GM12878 (cell line): ENCODE measurements at regions of chr17 and their contacts with region 1.

Region 1: GRCh38 chr17:70242781-70243437 is 73.6 kb downstream of the KCNJ2 start:
- DNase-seq: no peak
- ATAC-seq: peak; percentile 90
- H3K4me3 ChIP-seq: no peak overlapping the region
- H3K27ac ChIP-seq: no peak overlapping the region
- H3K4me1 ChIP-seq: no peaks in the 10 kb centered on the region
- H3K27me3 ChIP-seq: no peaks in the 10 kb centered on the region
- CTCF ChIP-seq: no peak
- EP300 ChIP-seq: no peak
- POLR2A ChIP-seq: no peak
- RAD21 ChIP-seq: no peak

Region 2: GRCh38 chr17:70168977-70169708 is 73.8 kb before region 1 on chr17 and contains the start of gene KCNJ2:
- CTCF ChIA-PET with region 1: interaction called, 3 read pairs
- POLR2A ChIA-PET with region 1: interaction called, 4 read pairs
- RAD21 ChIA-PET with region 1: interaction called, 12 read pairs
- SMC1A ChIA-PET with region 1: interaction called, 7 read pairs
- in situ Hi-C with region 1: no loop called
- intact Hi-C with region 1: loop called (anchors 5 kb)
- DNase-seq: no peak
- ATAC-seq: peak; percentile 95
- H3K4me3 ChIP-seq: peak within 1 kb of the TSS; percentile 38
- H3K27ac ChIP-seq: no peak within 1 kb of the TSS
- H3K4me1 ChIP-seq: peaks cover 8% of the 10 kb centered on the region
- H3K27me3 ChIP-seq: peaks cover 0 to 10% of the 10 kb centered on the region in 2 experiments; a peak in 1 of 4 replicates
- CTCF ChIP-seq: no peak
- EP300 ChIP-seq: no peak
- POLR2A ChIP-seq: no peak
- RAD21 ChIP-seq: no peak
- polyA plus RNA-seq, gene KCNJ2: 1.6 to 3.0 TPM

Region 3: DNA sequence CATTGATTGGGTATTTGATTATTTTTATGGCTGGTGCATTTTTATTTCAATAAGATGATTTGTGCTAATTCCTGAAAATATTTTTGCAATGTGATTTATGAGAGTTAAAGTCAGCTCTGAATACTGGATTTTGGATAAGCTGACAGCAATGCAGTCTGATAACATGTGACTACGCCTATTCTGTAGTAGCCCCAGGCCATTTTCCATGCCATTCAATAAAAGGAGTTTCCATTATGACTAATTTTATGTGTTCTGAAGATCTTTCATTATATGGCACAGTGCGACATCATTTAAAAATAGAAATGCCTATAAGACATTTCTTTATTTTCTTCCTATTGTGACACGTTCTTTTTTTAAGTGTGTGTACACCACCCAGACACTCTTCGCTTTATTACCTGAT is 27.3 kb before region 1 on chr17:
- CTCF ChIA-PET with region 1: interaction called, 9 read pairs
- POLR2A ChIA-PET with region 1: interaction called, 3 read pairs
- RAD21 ChIA-PET with region 1: no interaction called
- SMC1A ChIA-PET with region 1: interaction called, 83 read pairs
- in situ Hi-C with region 1: no loop called
- intact Hi-C with region 1: no loop called
- DNase-seq: no peak
- ATAC-seq: no peak
- H3K4me3 ChIP-seq: no peak overlapping the region
- H3K27ac ChIP-seq: no peak overlapping the region
- H3K4me1 ChIP-seq: no peaks in the 10 kb centered on the region
- H3K27me3 ChIP-seq: no peaks in the 10 kb centered on the region
- CTCF ChIP-seq: no peak
- EP300 ChIP-seq: no peak
- POLR2A ChIP-seq: no peak
- RAD21 ChIP-seq: no peak

Region 4: DNA sequence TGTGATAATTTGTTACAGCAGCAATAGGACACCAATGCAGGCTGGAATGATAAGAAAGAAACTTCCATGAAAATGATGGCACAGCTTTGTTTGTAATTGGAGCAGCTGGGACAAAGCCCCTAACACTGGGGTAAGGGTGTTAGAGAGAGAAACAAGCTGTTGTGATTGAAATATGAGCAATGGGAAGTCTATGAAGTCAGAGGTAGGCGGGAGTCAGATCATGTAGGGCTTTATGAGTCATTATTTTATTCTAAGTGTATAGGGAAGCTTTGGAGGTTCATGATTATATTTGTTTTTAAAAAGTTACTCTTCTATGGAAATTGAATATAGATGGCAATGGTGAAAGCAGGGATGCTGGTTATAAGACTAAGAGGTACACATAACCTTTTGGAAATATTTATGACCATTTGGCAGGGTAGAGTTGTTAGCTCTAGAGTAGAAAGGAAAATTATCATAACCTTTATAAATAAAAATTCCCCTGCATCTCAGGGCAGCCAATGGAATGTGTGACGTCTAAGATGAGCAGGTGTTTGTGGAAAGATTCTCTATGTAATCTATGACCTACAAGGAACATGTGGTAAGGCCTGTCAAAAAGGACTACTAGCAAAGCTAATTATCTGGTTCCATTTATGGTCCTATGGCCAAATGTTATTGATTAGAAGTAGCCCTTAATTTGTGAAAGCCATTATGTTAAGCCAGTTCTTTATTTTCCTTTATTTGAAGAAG is 12.0 kb after region 1 on chr17:
- CTCF ChIA-PET with region 1: interaction called, 7 read pairs
- POLR2A ChIA-PET with region 1: interaction called, 3 read pairs
- RAD21 ChIA-PET with region 1: interaction called, 3 read pairs
- SMC1A ChIA-PET with region 1: interaction called, 20 read pairs
- in situ Hi-C with region 1: no loop called
- intact Hi-C with region 1: no loop called
- DNase-seq: no peak
- ATAC-seq: no peak
- H3K4me3 ChIP-seq: no peak overlapping the region
- H3K27ac ChIP-seq: no peak overlapping the region
- H3K4me1 ChIP-seq: no peaks in the 10 kb centered on the region
- H3K27me3 ChIP-seq: no peaks in the 10 kb centered on the region
- CTCF ChIP-seq: no peak
- EP300 ChIP-seq: no peak
- POLR2A ChIP-seq: no peak
- RAD21 ChIP-seq: no peak

Region 5: GRCh38 chr17:70527364-70527888 is 284.5 kb after region 1 on chr17:
- CTCF ChIA-PET with region 1: no interaction called
- POLR2A ChIA-PET with region 1: no interaction called
- RAD21 ChIA-PET with region 1: no interaction called
- SMC1A ChIA-PET with region 1: no interaction called
- in situ Hi-C with region 1: no loop called
- intact Hi-C with region 1: no loop called
- DNase-seq: no peak
- ATAC-seq: peak; percentile 67
- H3K4me3 ChIP-seq: no peak overlapping the region
- H3K27ac ChIP-seq: no peak overlapping the region
- H3K4me1 ChIP-seq: no peaks in the 10 kb centered on the region
- H3K27me3 ChIP-seq: no peaks in the 10 kb centered on the region
- CTCF ChIP-seq: no peak
- EP300 ChIP-seq: no peak
- POLR2A ChIP-seq: no peak
- RAD21 ChIP-seq: no peak

Region 6: GRCh38 chr17:71371809-71372208 is 1128.9 kb after region 1 on chr17:
- CTCF ChIA-PET with region 1: no interaction called
- POLR2A ChIA-PET with region 1: no interaction called
- RAD21 ChIA-PET with region 1: no interaction called
- SMC1A ChIA-PET with region 1: no interaction called
- in situ Hi-C with region 1: no loop called
- intact Hi-C with region 1: no loop called
- DNase-seq: no peak
- ATAC-seq: no peak
- H3K4me3 ChIP-seq: no peak overlapping the region
- H3K27ac ChIP-seq: no peak overlapping the region
- H3K4me1 ChIP-seq: no peaks in the 10 kb centered on the region
- H3K27me3 ChIP-seq: no peaks in the 10 kb centered on the region
- CTCF ChIP-seq: no peak
- EP300 ChIP-seq: no peak
- POLR2A ChIP-seq: no peak
- RAD21 ChIP-seq: no peak